ENCODE measurements at regions of chr19 and their contacts with region 1.

Region 1: DNA sequence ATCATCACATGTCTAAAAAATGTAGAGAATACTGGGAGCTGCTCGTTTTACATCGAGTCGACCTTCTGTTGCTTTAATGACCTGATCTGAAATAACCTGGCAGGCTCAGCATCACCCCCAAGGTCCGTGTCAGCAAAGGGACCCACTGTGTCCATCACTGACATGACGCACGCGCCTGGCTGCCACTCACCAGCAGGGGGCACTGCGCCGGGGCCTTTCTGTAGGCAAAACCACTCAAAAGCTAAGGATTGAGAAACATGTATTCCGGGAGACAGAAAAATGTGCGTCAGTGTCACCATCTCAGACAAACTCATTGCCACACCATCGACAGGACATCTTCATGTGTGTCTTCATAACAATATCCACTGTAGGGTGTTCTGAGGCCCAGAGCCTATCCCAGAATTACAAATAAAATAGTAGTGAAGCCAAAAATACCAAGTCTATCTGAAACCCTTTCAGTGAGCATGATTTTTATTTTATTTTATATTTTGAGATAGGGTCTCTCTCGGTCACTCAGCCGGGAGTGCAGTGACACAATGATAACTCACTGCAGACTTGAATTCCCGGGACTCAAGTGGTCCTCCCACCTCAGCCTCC is 130.3 kb upstream of the LSM14A start:
- DNase-seq: peak; percentile 35 to 70 (median 57)
- ATAC-seq: peak; percentile 74
- H3K4me3 ChIP-seq: no peak overlapping the region
- H3K4me3 Mint-ChIP-seq: no peak overlapping the region
- H3K27ac ChIP-seq: no peak overlapping the region
- H3K27ac Mint-ChIP-seq: no peak overlapping the region
- H3K4me1 ChIP-seq: no peaks in the 10 kb centered on the region
- H3K4me1 Mint-ChIP-seq: no peaks in the 10 kb centered on the region
- H3K27me3 ChIP-seq: no peaks in the 10 kb centered on the region
- H3K27me3 Mint-ChIP-seq: peaks cover 9 to 43% (median 21%) of the 10 kb centered on the region in 5 donors

Region 2: DNA sequence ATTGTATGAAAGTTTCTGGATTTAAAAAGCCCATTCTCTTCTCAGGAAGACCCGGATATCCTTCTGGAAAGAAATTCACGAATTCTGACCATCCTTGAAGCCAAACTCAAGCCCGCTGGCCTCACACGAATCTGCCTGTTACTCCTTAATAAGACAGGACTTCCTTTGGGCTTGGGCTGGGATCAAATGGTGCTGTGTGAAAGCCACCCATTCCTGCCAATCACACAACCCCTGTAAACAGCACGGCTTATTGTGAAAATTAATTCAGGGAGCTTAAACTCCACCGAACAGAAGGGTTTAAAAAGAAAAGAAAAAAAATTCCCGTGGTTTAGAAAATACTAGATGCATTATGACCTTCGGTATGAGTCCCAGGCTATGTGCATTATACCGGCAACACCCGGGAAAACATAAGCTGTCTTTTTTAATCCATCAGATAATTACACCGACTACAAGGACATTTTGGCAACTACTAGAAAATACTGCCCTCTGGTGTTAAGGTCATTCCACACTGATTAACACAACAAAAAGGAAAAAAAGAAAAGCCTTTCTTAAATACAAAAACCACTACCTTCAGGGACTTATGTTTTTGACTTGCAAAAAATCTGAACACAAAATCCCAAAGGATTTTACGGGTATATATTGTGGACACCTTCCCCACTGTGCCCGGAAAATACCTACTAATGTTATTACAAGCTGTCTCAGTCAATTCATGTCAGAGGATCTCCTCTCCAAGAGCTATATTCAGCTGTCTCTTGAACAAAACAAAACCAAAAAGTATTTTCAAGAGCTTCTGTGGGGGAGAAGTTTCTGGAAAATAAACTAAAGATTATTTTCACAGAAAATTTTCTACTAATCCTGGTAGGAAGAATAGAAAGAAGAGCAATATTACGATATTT is 54.2 kb after region 1 on chr19:
- CTCF ChIA-PET with region 1: no interaction called
- POLR2A ChIA-PET with region 1: no interaction called
- intact Hi-C with region 1: loop called (anchors 1 kb)
- DNase-seq: peak in 5 of 9 donors; percentile 7 to 36 (median 25)
- ATAC-seq: peak; percentile 53
- H3K4me3 ChIP-seq: no peak overlapping the region
- H3K4me3 Mint-ChIP-seq: peak overlapping the region in 2 of 10 donors; percentile 49 to 56
- H3K27ac ChIP-seq: no peak overlapping the region
- H3K27ac Mint-ChIP-seq: peak overlapping the region in 1 of 9 donors; percentile 33
- H3K4me1 ChIP-seq: no peaks in the 10 kb centered on the region
- H3K4me1 Mint-ChIP-seq: peaks cover 0 to 5% (median 0%) of the 10 kb centered on the region in 7 donors
- H3K27me3 ChIP-seq: no peaks in the 10 kb centered on the region
- H3K27me3 Mint-ChIP-seq: peaks cover 5 to 27% (median 9%) of the 10 kb centered on the region in 5 donors

Region 3: DNA sequence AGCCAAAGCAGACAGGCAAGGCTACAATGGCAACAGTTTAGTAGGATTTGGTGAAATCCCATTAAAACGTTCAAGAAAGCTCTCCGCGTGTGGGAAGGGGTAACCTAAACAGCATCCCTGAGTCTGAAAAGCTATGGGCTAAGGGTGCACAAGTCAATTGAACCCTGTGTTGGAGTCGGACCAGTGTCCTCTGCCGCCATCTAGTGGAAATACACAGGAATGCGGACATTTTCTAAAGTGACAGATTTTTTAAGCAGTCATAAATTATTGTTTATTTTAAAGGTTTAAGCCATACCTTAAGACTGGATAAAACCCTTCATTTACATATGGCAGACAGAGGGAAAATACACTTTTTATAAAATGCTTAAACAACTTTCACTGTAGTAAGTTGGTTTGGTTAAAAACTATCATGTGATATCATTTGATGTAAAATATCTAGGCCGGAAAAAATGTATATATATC is 103.7 kb after region 1 on chr19:
- CTCF ChIA-PET with region 1: interaction called, 24 read pairs
- POLR2A ChIA-PET with region 1: interaction called, 8 read pairs
- intact Hi-C with region 1: loop called in 1 of 2 experiments (anchors 1 kb)
- DNase-seq: peak; percentile 11 to 68 (median 60)
- ATAC-seq: peak; percentile 85
- H3K4me3 ChIP-seq: no peak overlapping the region
- H3K4me3 Mint-ChIP-seq: no peak overlapping the region
- H3K27ac ChIP-seq: no peak overlapping the region
- H3K27ac Mint-ChIP-seq: no peak overlapping the region
- H3K4me1 ChIP-seq: no peaks in the 10 kb centered on the region
- H3K4me1 Mint-ChIP-seq: peaks cover 0 to 4% (median 0%) of the 10 kb centered on the region in 7 donors
- H3K27me3 ChIP-seq: no peaks in the 10 kb centered on the region
- H3K27me3 Mint-ChIP-seq: peaks cover 0 to 2% (median 0%) of the 10 kb centered on the region in 5 donors

Region 4: GRCh38 chr19:34345947-34346351 is 303.9 kb after region 1 on chr19:
- CTCF ChIA-PET with region 1: no interaction called
- POLR2A ChIA-PET with region 1: no interaction called
- intact Hi-C with region 1: loop called in 1 of 2 experiments (anchors 10 kb)
- DNase-seq: peak; percentile 37 to 66 (median 57)
- ATAC-seq: peak; percentile 45
- H3K4me3 ChIP-seq: no peak overlapping the region
- H3K4me3 Mint-ChIP-seq: peak overlapping the region in 1 of 10 donors; percentile 45
- H3K27ac ChIP-seq: no peak overlapping the region
- H3K27ac Mint-ChIP-seq: peak overlapping the region in 7 of 9 donors; percentile 33 to 87 (median 75)
- H3K4me1 ChIP-seq: peaks cover 11 to 13% of the 10 kb centered on the region in 2 donors
- H3K4me1 Mint-ChIP-seq: peaks cover 16 to 34% (median 28%) of the 10 kb centered on the region in 7 donors
- H3K27me3 ChIP-seq: no peaks in the 10 kb centered on the region
- H3K27me3 Mint-ChIP-seq: no peaks in the 10 kb centered on the region

Region 5: DNA sequence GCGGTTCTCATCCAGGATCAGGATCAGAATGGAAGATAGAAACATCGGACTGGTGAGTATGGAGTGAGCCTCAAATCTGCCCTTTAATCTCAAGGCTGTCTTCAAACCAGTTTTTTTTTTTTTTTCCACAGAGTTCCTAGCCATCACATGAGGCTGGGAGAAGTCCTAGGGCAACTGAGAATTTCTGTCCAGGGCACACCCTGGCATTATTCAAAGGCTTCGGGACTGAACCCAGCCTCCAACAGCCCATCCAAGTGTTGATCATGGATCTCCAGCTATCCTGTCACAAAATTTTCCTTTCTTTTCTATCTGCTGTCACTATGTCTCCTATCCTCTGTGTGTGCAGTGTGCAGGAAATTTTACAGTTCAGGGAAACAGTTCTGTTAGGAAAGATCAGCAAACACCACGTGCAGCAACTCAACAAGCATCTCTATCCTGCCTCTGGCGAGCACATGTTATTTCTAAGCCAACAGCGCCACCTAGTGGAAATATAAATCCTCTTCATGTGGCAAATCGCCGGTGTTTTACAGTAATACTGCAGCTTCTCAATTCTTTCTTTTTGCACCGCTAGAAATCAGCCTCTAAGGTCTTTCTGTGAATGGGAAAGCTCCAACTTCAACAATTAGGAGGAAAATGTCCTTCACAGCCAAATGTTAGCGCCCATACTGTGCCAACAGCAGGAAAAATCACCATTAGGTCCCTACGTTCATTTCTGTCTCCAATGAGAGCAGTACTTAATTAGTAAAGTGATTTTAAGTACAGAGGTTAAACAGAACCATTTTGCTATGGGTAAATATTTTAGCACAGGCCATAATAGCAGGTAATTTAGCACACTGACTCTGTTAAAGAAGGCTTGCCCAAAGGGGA is 670.6 kb after region 1 on chr19:
- CTCF ChIA-PET with region 1: no interaction called
- POLR2A ChIA-PET with region 1: no interaction called
- intact Hi-C with region 1: loop called in 1 of 2 experiments (anchors 2 kb)
- DNase-seq: peak in 8 of 9 donors; percentile 41 to 79 (median 70)
- ATAC-seq: peak; percentile 67
- H3K4me3 ChIP-seq: no peak overlapping the region
- H3K4me3 Mint-ChIP-seq: no peak overlapping the region
- H3K27ac ChIP-seq: no peak overlapping the region
- H3K27ac Mint-ChIP-seq: no peak overlapping the region
- H3K4me1 ChIP-seq: no peaks in the 10 kb centered on the region
- H3K4me1 Mint-ChIP-seq: peaks cover 0 to 6% (median 2%) of the 10 kb centered on the region in 7 donors
- H3K27me3 ChIP-seq: no peaks in the 10 kb centered on the region
- H3K27me3 Mint-ChIP-seq: peaks cover 3 to 50% (median 18%) of the 10 kb centered on the region in 5 donors